IMR-90 (cell line): ENCODE measurements at regions of chr15 and their contacts with region 1.

Region 1: GRCh38 chr15:25136119-25136518 is 181.3 kb downstream of the SNRPN start:
- DNase-seq: peak; percentile 15
- ATAC-seq: peak; percentile 55
- H3K4me3 ChIP-seq: no peak overlapping the region
- H3K27ac ChIP-seq: no peak overlapping the region
- H3K4me1 ChIP-seq: 0 out of 2 replicates have a peak, but pooled peaks cover 2% of the 10 kb centered on the region
- H3K27me3 ChIP-seq: no peaks in the 10 kb centered on the region
- CTCF ChIP-seq: peak; percentile 39
- POLR2A ChIP-seq: no peak
- RAD21 ChIP-seq: peak; percentile 26; the same call in 1 of the 2 replicates

Region 2: GRCh38 chr15:23532019-23532418 is 1604.1 kb before region 1 on chr15:
- CTCF ChIA-PET with region 1: no interaction called
- POLR2A ChIA-PET with region 1: no interaction called
- dilution Hi-C with region 1: no loop called
- in situ Hi-C with region 1: no loop called
- intact Hi-C with region 1: loop called (anchors 10 kb)
- DNase-seq: no peak
- ATAC-seq: no peak
- H3K4me3 ChIP-seq: no peak overlapping the region
- H3K27ac ChIP-seq: no peak overlapping the region
- H3K4me1 ChIP-seq: no peaks in the 10 kb centered on the region
- H3K27me3 ChIP-seq: no peaks in the 10 kb centered on the region
- CTCF ChIP-seq: no peak
- POLR2A ChIP-seq: no peak
- RAD21 ChIP-seq: no peak

Region 3: DNA sequence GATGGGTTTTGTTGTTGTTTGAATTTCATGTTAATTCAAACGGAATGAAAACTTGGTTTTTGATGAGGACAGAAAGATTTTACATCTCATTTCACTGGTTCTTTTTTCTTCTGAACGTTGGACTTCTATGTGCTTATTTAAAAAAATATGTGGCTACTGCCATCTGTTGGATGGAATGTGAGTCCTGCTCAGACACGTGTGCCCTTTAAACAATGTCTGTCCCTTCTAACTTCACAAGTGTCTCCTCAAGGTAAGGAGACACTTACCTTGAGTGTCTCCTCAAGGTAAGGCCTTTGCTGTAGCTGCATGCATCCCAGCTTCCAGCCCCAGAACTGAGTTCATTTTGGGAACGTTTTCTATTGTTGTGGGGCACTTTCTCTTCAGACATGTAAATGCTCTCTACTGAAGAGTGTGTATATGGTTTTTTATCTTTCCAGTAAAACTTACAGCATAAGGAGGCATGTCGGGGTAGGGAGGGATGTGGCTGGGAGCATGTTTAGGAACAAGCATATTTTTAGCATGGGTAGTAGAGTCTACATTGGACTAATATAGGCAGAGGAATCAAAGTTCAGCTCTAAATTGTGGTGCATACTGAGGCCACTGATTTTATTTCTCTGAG is 365.8 kb after region 1 on chr15:
- CTCF ChIA-PET with region 1: interaction called, 4 read pairs
- POLR2A ChIA-PET with region 1: no interaction called
- dilution Hi-C with region 1: no loop called
- in situ Hi-C with region 1: no loop called
- intact Hi-C with region 1: loop called (anchors 5 kb)
- DNase-seq: peak; percentile 41
- ATAC-seq: peak; percentile 67
- H3K4me3 ChIP-seq: no peak overlapping the region
- H3K27ac ChIP-seq: no peak overlapping the region
- H3K4me1 ChIP-seq: peaks cover 3% of the 10 kb centered on the region; the same call in 1 of the 2 replicates
- H3K27me3 ChIP-seq: no peaks in the 10 kb centered on the region
- CTCF ChIP-seq: peak; percentile 57
- POLR2A ChIP-seq: no peak
- RAD21 ChIP-seq: peak; percentile 48

Region 4: GRCh38 chr15:26864664-26865191 is 1728.6 kb after region 1 on chr15:
- CTCF ChIA-PET with region 1: no interaction called
- POLR2A ChIA-PET with region 1: no interaction called
- dilution Hi-C with region 1: no loop called
- in situ Hi-C with region 1: no loop called
- intact Hi-C with region 1: loop called (anchors 10 kb)
- DNase-seq: peak; percentile 36
- ATAC-seq: peak; percentile 56
- H3K4me3 ChIP-seq: no peak overlapping the region
- H3K27ac ChIP-seq: no peak overlapping the region
- H3K4me1 ChIP-seq: no peaks in the 10 kb centered on the region
- H3K27me3 ChIP-seq: peaks cover 16% of the 10 kb centered on the region
- CTCF ChIP-seq: peak; percentile 68
- POLR2A ChIP-seq: no peak
- RAD21 ChIP-seq: peak; percentile 83